Heart right ventricle (tissue), 16 donors: ENCODE measurements at regions of chr2 and their contacts with region 1.

Region 1: GRCh38 chr2:11876436-11876835 is 130.0 kb downstream of the LPIN1 start:
- DNase-seq: no peak
- ATAC-seq: no peak
- H3K4me3 ChIP-seq: no peak overlapping the region
- H3K27ac ChIP-seq: no peak overlapping the region
- H3K4me1 ChIP-seq: peaks cover 0 to 20% (median 0%) of the 10 kb centered on the region in 9 donors
- H3K27me3 ChIP-seq: no peaks in the 10 kb centered on the region
- CTCF ChIP-seq: no peak

Region 2: DNA sequence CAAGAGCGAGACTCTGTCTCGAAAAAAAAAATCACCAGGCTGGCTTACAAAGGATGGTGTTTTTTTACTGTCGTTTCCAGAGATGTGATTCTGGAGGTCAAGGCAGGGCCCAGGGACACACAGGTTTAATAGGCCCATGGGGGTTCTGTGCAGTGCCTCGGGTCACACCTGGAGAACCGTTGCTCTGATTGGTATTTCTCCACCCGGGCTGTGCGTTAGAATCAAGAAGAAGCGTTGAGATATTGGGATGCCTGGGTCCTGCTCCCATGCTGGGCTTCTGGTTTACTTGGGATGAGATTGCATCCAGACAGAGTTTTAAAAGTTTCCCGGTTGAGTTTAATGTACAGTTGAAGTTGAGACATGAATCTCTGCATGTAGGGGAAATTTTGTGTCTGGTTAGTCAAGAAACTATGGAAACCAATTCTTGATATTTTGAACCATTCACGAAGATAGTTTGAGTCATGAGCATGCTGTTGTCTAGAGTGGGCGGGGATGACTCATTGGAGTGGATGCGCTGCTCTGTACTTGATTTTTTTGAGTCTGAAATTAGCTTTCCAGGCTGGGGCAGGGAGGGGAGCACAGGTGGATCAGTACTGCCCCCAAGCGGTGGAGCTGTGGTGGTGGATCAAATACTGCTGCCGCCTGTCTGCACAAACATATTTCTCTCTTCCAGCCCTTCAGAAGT is 292.5 kb before region 1 on chr2:
- intact Hi-C with region 1: loop called in 1 of 10 experiments (anchors 5 kb)
- DNase-seq: peak; percentile 61 to 78
- ATAC-seq: peak; percentile 54 to 83 (median 79)
- H3K4me3 ChIP-seq: no peak overlapping the region
- H3K27ac ChIP-seq: peak overlapping the region in 8 of 10 donors; percentile 3 to 74 (median 56)
- H3K4me1 ChIP-seq: peaks cover 0 to 20% (median 6%) of the 10 kb centered on the region in 9 donors
- H3K27me3 ChIP-seq: no peaks in the 10 kb centered on the region
- CTCF ChIP-seq: peak; percentile 50 to 85 (median 81)

Region 3: GRCh38 chr2:11914455-11914854 is 38.0 kb after region 1 on chr2:
- intact Hi-C with region 1: no loop called
- DNase-seq: no peak
- ATAC-seq: peak in 1 of 8 donors; percentile 81
- H3K4me3 ChIP-seq: no peak overlapping the region
- H3K27ac ChIP-seq: no peak overlapping the region
- H3K4me1 ChIP-seq: no peaks in the 10 kb centered on the region
- H3K27me3 ChIP-seq: peaks cover 0 to 4% (median 0%) of the 10 kb centered on the region in 7 donors
- CTCF ChIP-seq: no peak

Region 4: DNA sequence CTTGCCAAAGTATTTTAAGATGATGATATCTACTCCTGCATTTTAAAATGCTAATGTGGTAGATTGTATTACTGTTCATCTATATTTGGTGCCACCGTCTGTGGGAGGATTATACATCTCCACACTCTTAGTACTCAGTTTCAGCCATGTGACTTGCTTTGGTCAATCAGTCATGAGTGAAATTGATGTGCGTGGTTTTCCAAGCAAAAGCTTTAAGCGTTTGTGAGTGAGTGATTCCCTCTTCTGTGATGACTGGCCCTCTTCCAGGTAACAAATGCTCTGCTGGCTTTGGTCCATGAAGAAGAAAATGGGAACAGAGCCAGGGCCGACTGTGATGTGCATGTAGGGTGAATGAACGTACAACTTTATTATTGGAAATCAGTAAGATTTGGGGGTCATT is 200.4 kb after region 1 on chr2:
- intact Hi-C with region 1: no loop called
- DNase-seq: no peak
- ATAC-seq: no peak
- H3K4me3 ChIP-seq: no peak overlapping the region
- H3K27ac ChIP-seq: no peak overlapping the region
- H3K4me1 ChIP-seq: no peaks in the 10 kb centered on the region
- H3K27me3 ChIP-seq: no peaks in the 10 kb centered on the region
- CTCF ChIP-seq: no peak

Region 5: DNA sequence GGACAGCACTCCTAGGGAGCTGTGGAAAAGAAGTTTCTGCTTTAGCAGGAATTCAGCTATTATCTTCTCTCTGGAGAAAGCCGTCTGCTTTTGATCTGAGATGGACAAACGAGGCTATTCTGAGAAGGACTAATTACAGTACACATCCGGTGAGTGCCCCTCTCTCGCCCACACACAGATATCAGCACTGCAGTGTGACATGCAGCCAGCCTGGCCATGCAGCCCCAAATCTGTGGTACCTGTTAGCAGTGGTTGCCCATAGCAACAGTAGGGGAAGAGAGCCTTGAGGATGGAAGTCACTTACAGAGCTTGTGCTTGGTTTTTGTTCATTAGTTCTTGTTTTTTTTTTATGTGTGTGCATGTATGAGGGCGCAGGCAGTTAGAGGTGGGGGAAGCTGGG is 766.4 kb after region 1 on chr2:
- intact Hi-C with region 1: no loop called
- DNase-seq: no peak
- ATAC-seq: no peak
- H3K4me3 ChIP-seq: no peak overlapping the region
- H3K27ac ChIP-seq: no peak overlapping the region
- H3K4me1 ChIP-seq: peaks cover 0 to 2% (median 0%) of the 10 kb centered on the region in 9 donors
- H3K27me3 ChIP-seq: no peaks in the 10 kb centered on the region
- CTCF ChIP-seq: no peak